ENCODE measurements at regions of chr2 and their contacts with region 1.

Region 1: GRCh38 chr2:170815746-170816503 is 762 bp upstream of the GAD1 start:
- DNase-seq: peak in 1 of 2 donors; percentile 89
- H3K4me3 ChIP-seq: no peak overlapping the region
- CTCF ChIP-seq: peak in 1 of 3 donors; percentile 45
- POLR2A ChIP-seq: no peak

Region 2: DNA sequence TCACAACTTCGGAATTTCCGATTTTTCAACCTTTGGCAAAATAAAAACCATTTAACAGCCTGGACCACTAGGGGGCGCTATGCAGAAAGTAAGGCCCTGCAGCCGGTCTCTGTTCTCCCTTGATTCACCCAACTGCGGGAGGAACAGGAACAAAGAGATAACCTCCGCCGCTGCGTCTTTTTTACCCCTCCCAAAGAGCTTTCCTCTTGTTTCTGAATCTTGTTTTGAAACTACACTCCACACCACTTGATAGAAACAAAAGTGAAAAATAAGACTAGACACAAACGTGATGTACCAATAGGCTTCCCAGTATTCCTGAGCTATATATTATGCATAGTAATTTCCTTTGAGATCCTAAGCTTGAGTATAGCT is 406.8 kb before region 1 on chr2:
- intact Hi-C with region 1: loop called (anchors 5 kb)
- DNase-seq: peak; percentile 67 to 90
- H3K4me3 ChIP-seq: no peak overlapping the region
- CTCF ChIP-seq: no peak
- POLR2A ChIP-seq: no peak

Region 3: DNA sequence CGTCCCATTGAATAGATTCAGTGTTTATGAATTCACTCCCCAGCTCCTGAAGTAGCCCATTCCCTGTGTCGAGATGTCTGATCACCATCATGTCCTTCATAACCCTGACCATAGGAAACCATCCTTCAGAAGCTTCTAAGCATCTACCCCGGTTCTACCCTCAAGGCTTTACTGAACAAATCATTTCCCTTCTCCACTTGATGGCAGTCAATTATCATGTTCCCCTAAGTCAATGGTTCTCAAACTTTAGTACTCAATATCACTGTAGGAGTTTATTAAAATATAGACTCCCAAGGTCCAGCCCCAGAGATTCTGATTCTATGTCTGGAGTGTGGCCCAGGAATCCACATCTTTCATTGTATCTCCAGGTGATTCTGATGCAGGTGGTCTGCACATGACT is 329.2 kb before region 1 on chr2:
- intact Hi-C with region 1: loop called (anchors 10 kb)
- DNase-seq: no peak
- H3K4me3 ChIP-seq: no peak overlapping the region
- CTCF ChIP-seq: no peak
- POLR2A ChIP-seq: no peak

Measured in lower leg skin (tissue), 4 donors.